ENCODE measurements at regions of chr17 and their contacts with region 1.

Region 1: DNA sequence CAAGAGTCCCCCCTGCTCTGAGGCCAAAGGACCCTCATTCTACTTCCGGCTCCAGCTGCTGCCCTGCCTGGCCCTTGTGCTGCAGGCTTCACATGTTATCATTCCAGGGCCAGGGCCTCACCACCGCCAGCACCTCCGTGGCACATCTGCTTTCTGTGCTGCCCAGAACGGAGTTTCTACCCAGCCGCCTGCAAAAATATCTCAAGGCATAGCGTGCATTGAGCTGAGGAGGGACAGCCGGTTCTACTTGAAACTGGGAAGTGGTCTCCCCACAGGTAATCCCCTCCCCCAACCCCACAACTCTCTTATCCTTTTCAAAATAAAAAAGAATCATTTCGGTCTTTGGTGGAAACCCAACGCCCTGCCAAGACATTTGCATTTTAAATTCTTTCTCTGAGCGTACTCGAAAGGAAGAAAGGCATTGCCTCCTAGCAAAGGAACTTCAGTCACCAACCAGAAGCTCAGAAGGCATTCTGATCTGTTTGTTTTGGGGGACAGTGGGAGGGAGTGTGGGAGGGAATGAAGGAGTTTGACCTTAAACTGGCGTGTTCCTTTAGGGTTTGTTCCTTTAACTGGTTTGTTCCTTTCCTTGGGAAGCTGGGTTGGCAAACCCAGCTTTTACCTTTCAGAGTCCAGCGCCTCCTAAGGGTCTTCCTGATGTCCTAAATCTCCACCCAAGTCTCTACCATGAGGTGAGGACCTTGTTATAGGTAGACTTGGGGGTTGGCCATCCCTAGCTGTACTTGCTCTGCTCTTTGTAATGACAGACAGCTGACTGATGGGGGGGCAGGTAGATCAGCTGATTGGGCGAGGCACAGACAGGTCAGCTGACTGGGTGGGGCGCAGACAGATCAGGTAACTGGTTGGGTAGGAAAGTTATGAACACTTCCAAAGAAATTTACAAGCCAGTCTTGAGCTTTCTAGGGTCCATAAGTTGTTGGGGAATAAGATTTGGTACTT is 33.4 kb upstream of the PIK3R6 start:
- DNase-seq: peak; percentile 63
- ATAC-seq: no peak
- H3K4me3 Mint-ChIP-seq: peak overlapping the region; percentile 49
- H3K27ac Mint-ChIP-seq: peak overlapping the region; percentile 96
- H3K4me1 Mint-ChIP-seq: peaks cover 70% of the 10 kb centered on the region
- H3K27me3 Mint-ChIP-seq: no peaks in the 10 kb centered on the region

Region 2: GRCh38 chr17:8887834-8888703 is 12.8 kb before region 1 on chr17:
- CTCF ChIA-PET with region 1: interaction called, 12 read pairs
- POLR2A ChIA-PET with region 1: interaction called, 4 read pairs
- DNase-seq: no peak
- ATAC-seq: no peak
- H3K4me3 Mint-ChIP-seq: no peak overlapping the region
- H3K27ac Mint-ChIP-seq: no peak overlapping the region
- H3K4me1 Mint-ChIP-seq: peaks cover 10% of the 10 kb centered on the region
- H3K27me3 Mint-ChIP-seq: no peaks in the 10 kb centered on the region

Region 3: GRCh38 chr17:8941520-8941919 is 40.6 kb after region 1 on chr17:
- CTCF ChIA-PET with region 1: interaction called, 9 read pairs
- POLR2A ChIA-PET with region 1: interaction called, 29 read pairs
- DNase-seq: peak; percentile 83
- ATAC-seq: peak; percentile 79
- H3K4me3 Mint-ChIP-seq: peak overlapping the region; percentile 63
- H3K27ac Mint-ChIP-seq: peak overlapping the region; percentile 89
- H3K4me1 Mint-ChIP-seq: peaks cover 90% of the 10 kb centered on the region
- H3K27me3 Mint-ChIP-seq: no peaks in the 10 kb centered on the region

Region 4: GRCh38 chr17:8949061-8949661 is 48.3 kb after region 1 on chr17:
- CTCF ChIA-PET with region 1: interaction called, 15 read pairs
- POLR2A ChIA-PET with region 1: interaction called, 22 read pairs
- DNase-seq: no peak
- ATAC-seq: peak; percentile 52
- H3K4me3 Mint-ChIP-seq: peak overlapping the region; percentile 22
- H3K27ac Mint-ChIP-seq: peak overlapping the region; percentile 64
- H3K4me1 Mint-ChIP-seq: peaks cover 93% of the 10 kb centered on the region
- H3K27me3 Mint-ChIP-seq: no peaks in the 10 kb centered on the region

Region 5: DNA sequence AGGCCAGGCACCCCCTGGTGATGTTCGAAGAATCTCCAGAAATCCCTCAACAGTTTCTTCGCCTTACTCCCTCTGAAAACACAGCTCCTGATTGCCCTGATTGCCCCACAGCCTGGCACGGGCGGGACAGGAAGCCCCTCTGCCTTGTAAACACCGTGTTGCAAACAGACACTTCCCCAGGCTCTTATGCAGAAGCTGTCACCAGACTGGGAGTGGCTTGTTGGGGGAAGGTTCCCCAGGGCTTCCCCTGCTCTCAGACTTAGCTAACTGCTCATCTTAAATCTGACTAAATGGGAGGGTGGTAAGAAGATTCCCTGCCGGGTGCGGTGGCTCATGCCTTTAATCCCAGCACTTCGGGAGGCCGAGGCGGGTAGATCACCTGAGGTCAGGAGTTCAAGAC is 53.4 kb after region 1 on chr17:
- CTCF ChIA-PET with region 1: interaction called, 15 read pairs
- POLR2A ChIA-PET with region 1: interaction called, 22 read pairs
- DNase-seq: peak; percentile 82
- ATAC-seq: peak; percentile 86
- H3K4me3 Mint-ChIP-seq: peak overlapping the region; percentile 53
- H3K27ac Mint-ChIP-seq: peak overlapping the region; percentile 87
- H3K4me1 Mint-ChIP-seq: peaks cover 96% of the 10 kb centered on the region
- H3K27me3 Mint-ChIP-seq: no peaks in the 10 kb centered on the region

Region 6: DNA sequence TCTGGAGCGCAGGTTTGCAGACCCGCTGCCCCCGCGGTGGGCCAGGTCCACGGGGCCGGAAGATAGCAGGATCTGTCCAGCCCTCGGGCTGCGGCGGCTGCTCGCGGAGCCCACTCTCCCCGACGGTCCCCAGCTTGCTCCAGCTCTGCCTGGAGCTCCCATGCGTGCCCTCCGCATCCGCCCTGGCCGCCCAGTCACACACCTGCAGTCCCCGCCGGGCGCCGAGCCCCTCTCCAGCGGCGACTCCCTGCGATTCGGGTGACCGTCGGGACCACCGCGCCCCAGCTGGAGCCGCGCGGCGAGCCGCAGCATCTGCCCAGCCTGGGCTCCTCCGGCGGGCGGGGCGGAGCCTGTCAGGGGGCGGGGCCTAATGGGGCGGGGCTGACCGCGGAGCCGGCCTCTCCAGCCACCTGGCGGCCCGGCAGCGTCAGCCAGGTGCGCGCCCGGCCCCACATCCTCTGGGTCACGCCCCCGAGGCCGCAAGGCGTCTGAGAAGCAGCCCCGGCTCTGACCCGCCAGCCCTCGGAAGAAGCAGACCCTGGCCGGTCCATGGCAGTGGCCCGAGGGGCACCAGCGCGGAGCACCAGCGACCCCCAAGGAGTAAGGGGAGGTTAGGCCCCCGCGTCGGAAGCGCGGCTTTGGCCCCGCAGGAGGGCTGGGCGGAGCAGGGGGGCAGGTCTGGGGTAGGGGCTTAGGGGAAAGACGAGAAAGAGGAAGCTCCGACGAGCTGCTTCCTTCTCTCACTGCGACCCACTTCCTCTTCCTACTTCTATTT is 64.7 kb after region 1 on chr17 and contains the start of gene PIK3R5:
- CTCF ChIA-PET with region 1: interaction called, 22 read pairs
- POLR2A ChIA-PET with region 1: interaction called, 28 read pairs
- DNase-seq: peak; percentile 86
- ATAC-seq: peak; percentile 81
- H3K4me3 Mint-ChIP-seq: peak within 1 kb of the TSS; percentile 99
- H3K27ac Mint-ChIP-seq: peak within 1 kb of the TSS; percentile 97
- H3K4me1 Mint-ChIP-seq: peaks cover 60% of the 10 kb centered on the region
- H3K27me3 Mint-ChIP-seq: no peaks in the 10 kb centered on the region
- total RNA-seq, gene PIK3R5: 73.9 to 77.9 TPM

Region 7: GRCh38 chr17:9072696-9073339 is 171.9 kb after region 1 on chr17:
- CTCF ChIA-PET with region 1: no interaction called
- POLR2A ChIA-PET with region 1: no interaction called
- DNase-seq: no peak
- ATAC-seq: no peak
- H3K4me3 Mint-ChIP-seq: no peak overlapping the region
- H3K27ac Mint-ChIP-seq: no peak overlapping the region
- H3K4me1 Mint-ChIP-seq: no peaks in the 10 kb centered on the region
- H3K27me3 Mint-ChIP-seq: peaks cover 4% of the 10 kb centered on the region

Measured in activated CD8-positive, alpha-beta T cell treated with anti-CD3 and anti-CD28 coated beads, Interleukin-2, amount 10 ng/mL, durations not matched to agents 7 days and 5 days (primary cell).